Activated naive CD8-positive, alpha-beta T cell treated with anti-CD3 and anti-CD28 coated beads, Interleukin-2, amount 10 ng/mL, durations not matched to agents 7 days and 5 days (primary cell): ENCODE measurements at regions of chr19 and their contacts with region 1.

Region 1: GRCh38 chr19:2061495-2062381 is 10.7 kb upstream of the MKNK2 start:
- DNase-seq: peak; percentile 100
- ATAC-seq: peak; percentile 91
- H3K4me3 Mint-ChIP-seq: peak overlapping the region; percentile 91
- H3K27ac Mint-ChIP-seq: peak overlapping the region; percentile 90
- H3K4me1 Mint-ChIP-seq: peaks cover 19% of the 10 kb centered on the region
- H3K27me3 Mint-ChIP-seq: no peaks in the 10 kb centered on the region

Region 2: GRCh38 chr19:2041683-2042484 is 19.9 kb before region 1 on chr19:
- POLR2A ChIA-PET with region 1: interaction called, 12 read pairs
- DNase-seq: peak; percentile 99
- ATAC-seq: peak; percentile 91
- H3K4me3 Mint-ChIP-seq: peak overlapping the region; percentile 68
- H3K27ac Mint-ChIP-seq: peak overlapping the region; percentile 87
- H3K4me1 Mint-ChIP-seq: peaks cover 13% of the 10 kb centered on the region
- H3K27me3 Mint-ChIP-seq: no peaks in the 10 kb centered on the region

Region 3: GRCh38 chr19:2084993-2085720 is 23.4 kb after region 1 on chr19:
- POLR2A ChIA-PET with region 1: interaction called, 21 read pairs
- DNase-seq: peak; percentile 93
- ATAC-seq: peak; percentile 56
- H3K4me3 Mint-ChIP-seq: peak overlapping the region; percentile 97
- H3K27ac Mint-ChIP-seq: peak overlapping the region; percentile 99
- H3K4me1 Mint-ChIP-seq: peaks cover 60% of the 10 kb centered on the region
- H3K27me3 Mint-ChIP-seq: no peaks in the 10 kb centered on the region

Region 4: GRCh38 chr19:2113439-2114211 is 51.9 kb after region 1 on chr19:
- POLR2A ChIA-PET with region 1: no interaction called
- DNase-seq: no peak
- ATAC-seq: no peak
- H3K4me3 Mint-ChIP-seq: no peak overlapping the region
- H3K27ac Mint-ChIP-seq: no peak overlapping the region
- H3K4me1 Mint-ChIP-seq: peaks cover 2% of the 10 kb centered on the region
- H3K27me3 Mint-ChIP-seq: no peaks in the 10 kb centered on the region